ENCODE measurements at regions of chr1 and their contacts with region 1.

Region 1: GRCh38 chr1:235328357-235329138 is at the start of gene GGPS1:
- DNase-seq: peak; percentile 99
- ATAC-seq: peak; percentile 82
- H3K4me3 Mint-ChIP-seq: no peak within 1 kb of the TSS
- H3K27ac Mint-ChIP-seq: peak within 1 kb of the TSS; percentile 86
- H3K4me1 Mint-ChIP-seq: peaks cover 45% of the 10 kb centered on the region
- H3K27me3 Mint-ChIP-seq: no peaks in the 10 kb centered on the region
- CTCF ChIP-seq: no peak
- total RNA-seq, gene GGPS1: 35.4 to 37.8 TPM

Region 2: DNA sequence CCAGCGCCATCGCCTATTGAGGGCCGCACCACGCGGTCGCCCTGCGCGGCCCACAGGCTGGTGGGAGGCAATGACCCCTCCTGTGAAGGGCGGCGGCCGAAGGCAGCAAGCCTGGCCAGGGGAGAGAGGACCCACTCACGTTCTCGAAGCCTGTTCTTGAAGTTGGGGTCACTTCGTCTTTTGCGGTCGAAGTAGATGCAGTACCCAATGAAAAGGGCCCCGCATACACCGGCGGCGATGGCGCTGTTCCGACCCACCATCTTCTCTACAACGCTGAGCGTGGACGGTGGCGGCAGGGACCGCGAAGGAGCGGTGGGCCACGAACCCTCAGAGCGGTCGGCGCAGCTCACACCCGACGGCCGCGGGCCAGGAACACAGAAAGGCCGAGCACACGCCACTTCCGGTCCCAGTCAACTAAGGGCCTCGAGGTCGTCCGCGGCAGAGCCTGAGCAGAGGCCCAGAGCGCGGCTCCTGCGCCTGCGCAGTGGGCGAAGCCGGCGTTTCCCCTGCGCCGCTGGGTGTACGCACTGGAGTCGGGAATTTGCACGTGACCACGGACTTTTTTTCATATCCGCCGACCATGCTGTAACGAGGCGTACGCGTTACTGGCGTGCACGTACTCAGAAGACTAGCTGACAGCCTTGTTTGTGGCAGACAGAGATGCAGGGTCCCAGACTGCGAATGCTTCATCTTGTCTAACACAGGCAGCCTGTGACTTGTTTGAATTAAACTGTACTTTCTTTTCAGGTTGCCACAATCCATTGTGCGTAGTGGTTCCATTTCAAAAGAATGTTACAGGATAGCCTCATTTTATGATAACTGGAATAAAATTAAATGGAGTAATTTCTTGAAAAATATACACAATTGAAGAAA is 199.9 kb before region 1 on chr1 and contains the start of gene TOMM20:
- CTCF ChIA-PET with region 1: no interaction called
- POLR2A ChIA-PET with region 1: interaction called, 3 read pairs
- intact Hi-C with region 1: loop called (anchors 2 kb)
- DNase-seq: peak; percentile 97
- ATAC-seq: peak; percentile 97
- H3K4me3 Mint-ChIP-seq: peak within 1 kb of the TSS; percentile 99
- H3K27ac Mint-ChIP-seq: peak within 1 kb of the TSS; percentile 98
- H3K4me1 Mint-ChIP-seq: peaks cover 35% of the 10 kb centered on the region
- H3K27me3 Mint-ChIP-seq: no peaks in the 10 kb centered on the region
- CTCF ChIP-seq: no peak
- total RNA-seq, gene TOMM20: 155 to 159 TPM

Region 3: GRCh38 chr1:235253219-235253962 is 75.2 kb before region 1 on chr1:
- CTCF ChIA-PET with region 1: interaction called, 7 read pairs
- POLR2A ChIA-PET with region 1: no interaction called
- intact Hi-C with region 1: loop called (anchors 2 kb)
- DNase-seq: peak; percentile 74
- ATAC-seq: peak; percentile 96
- H3K4me3 Mint-ChIP-seq: no peak overlapping the region
- H3K27ac Mint-ChIP-seq: no peak overlapping the region
- H3K4me1 Mint-ChIP-seq: peaks cover 32% of the 10 kb centered on the region
- H3K27me3 Mint-ChIP-seq: no peaks in the 10 kb centered on the region
- CTCF ChIP-seq: peak; percentile 96

Region 4: DNA sequence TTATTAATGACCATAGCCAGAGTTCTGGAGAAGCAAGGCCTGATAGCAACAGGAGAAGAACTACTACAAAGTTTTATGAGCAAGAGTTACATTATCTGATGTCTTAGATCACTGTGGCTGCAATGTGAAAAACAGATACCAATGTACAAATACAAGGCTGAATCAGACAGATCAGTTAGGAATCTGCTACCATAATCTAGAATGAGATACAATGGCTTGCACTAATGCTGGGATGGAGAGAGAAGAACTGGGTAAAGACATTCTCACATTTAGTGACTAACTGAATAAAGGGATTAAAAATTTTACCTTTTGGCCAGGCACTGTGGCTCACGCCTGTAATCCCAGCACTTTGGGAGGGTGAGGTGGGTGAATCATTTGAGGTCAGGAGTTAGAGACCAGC is 41.9 kb before region 1 on chr1:
- CTCF ChIA-PET with region 1: interaction called, 3 read pairs
- POLR2A ChIA-PET with region 1: interaction called, 3 read pairs
- intact Hi-C with region 1: loop called (anchors 5 kb)
- DNase-seq: no peak
- ATAC-seq: peak; percentile 61
- H3K4me3 Mint-ChIP-seq: no peak overlapping the region
- H3K27ac Mint-ChIP-seq: peak overlapping the region; percentile 23
- H3K4me1 Mint-ChIP-seq: peaks cover 57% of the 10 kb centered on the region
- H3K27me3 Mint-ChIP-seq: no peaks in the 10 kb centered on the region
- CTCF ChIP-seq: no peak

Region 5: GRCh38 chr1:235313931-235314678 is 14.4 kb before region 1 on chr1:
- CTCF ChIA-PET with region 1: interaction called, 20 read pairs
- POLR2A ChIA-PET with region 1: interaction called, 15 read pairs
- intact Hi-C with region 1: no loop called
- DNase-seq: no peak
- ATAC-seq: peak; percentile 22
- H3K4me3 Mint-ChIP-seq: peak overlapping the region; percentile 49
- H3K27ac Mint-ChIP-seq: peak overlapping the region; percentile 85
- H3K4me1 Mint-ChIP-seq: peaks cover 65% of the 10 kb centered on the region
- H3K27me3 Mint-ChIP-seq: no peaks in the 10 kb centered on the region
- CTCF ChIP-seq: no peak

Region 6: DNA sequence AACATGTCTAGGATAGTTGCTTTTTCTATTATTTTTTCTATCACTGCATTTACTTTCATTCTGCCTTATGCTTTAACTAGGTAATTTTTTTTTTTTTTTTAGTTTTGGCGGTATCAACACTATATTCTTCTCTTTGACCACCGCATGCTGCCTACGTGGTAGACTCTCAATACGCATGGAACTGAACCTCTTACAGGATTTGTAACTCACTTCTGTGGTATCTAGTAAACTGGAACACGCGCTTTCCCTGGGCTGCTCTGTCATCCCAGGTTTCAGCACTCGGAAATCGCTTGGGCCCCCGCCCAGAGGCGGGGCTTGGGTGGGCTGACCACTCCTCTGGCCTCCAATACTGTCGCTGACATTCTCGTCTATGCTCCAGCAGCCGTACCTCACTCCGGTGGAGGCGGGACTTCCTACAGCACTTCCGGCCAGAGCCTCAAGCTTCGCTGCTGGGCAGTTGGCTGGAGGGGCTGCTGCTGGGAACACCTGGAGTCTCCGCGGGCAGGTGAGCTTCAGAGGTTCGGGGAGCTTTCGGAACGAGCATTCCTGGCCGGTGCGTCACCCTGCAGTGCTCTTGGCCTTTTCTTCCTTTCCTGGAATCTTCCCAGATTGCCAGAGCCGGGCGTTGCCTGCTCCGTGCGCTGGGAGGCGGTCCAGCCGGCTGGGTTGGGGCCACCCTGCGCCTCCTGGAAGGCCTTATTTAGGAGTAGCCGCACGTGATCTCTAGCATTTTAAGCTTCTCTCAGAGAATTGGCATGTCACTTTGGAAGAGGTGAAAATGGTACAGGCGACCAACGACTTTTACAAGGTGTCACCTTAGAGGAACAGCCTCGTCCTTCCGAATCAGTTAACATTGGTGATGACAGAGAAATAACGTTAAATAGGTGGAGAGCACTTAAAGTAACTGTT is 38.7 kb after region 1 on chr1 and contains the start of gene TBCE:
- CTCF ChIA-PET with region 1: no interaction called
- POLR2A ChIA-PET with region 1: interaction called, 4 read pairs
- intact Hi-C with region 1: loop called (anchors 5 kb)
- DNase-seq: peak; percentile 94
- ATAC-seq: peak; percentile 99
- H3K4me3 Mint-ChIP-seq: peak within 1 kb of the TSS; percentile 95
- H3K27ac Mint-ChIP-seq: peak within 1 kb of the TSS; percentile 93
- H3K4me1 Mint-ChIP-seq: peaks cover 22% of the 10 kb centered on the region
- H3K27me3 Mint-ChIP-seq: no peaks in the 10 kb centered on the region
- CTCF ChIP-seq: no peak
- total RNA-seq, gene TBCE: 21.8 to 24.0 TPM